ENCODE measurements at regions of chr4 and their contacts with region 1.

Region 1: DNA sequence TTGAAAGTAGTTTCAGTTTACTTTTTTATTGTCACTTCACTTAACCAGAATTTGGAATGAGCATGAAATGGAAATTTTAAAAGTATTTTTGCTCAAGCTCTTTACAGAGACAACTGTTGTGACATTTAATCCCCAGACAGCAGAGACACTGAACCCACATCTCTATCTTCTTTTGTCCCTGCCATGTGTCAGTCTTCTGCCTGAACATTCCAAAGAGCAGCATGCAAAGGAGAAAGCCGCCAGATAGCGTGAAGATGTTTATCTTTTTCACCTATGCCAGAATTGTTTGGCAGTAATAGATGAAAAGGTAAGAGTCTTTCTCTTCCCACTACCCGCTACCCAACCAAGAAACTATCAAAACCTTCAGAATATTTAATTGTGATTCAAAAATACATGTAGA is 46.8 kb downstream of the NDNF start:
- DNase-seq: no peak
- ATAC-seq: no peak
- H3K4me3 ChIP-seq: no peak overlapping the region
- H3K27ac ChIP-seq: no peak overlapping the region
- H3K4me1 ChIP-seq: peaks cover 0 to 4% (median 0%) of the 10 kb centered on the region in 12 donors
- H3K27me3 ChIP-seq: no peaks in the 10 kb centered on the region
- CTCF ChIP-seq: no peak
- POLR2A ChIP-seq: no peak

Region 2: DNA sequence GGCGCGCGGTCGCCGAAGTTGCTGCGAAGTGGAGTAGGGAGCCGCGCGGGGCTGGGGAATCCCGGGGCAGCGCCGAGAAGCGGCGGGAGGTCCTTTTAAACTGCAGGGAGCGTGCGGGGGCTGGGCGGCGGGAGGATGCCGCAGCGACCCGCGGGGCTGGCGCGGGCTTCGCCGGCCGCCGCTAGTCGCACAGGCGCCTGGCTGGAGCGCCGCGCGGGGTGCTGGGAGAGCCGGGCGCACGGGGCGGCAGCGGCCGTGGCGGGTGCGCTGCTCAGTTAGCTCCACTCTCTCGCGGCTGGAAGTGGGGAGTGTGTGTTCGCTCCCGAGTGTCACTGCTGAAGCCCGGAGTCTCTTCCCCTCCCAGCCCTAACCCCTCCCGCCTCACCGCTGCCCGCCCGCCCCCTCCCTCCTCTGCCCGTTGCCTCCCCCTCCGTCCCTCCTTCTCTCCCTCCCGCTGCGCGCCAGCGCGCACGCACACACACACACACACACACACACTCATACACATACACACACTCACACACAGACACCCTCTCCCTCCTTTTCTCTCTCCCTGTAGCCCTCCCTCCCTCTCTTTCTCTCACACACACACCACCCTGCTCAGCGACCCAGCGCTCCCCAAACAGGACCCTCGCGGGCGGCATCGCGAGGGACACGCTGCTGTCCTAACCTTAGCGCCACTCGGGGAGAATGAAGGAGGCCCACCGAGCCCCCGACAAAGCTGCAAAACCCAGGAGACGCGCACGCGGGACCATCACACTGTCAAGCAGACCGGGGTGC is 46.9 kb after region 1 on chr4 and contains the start of gene NDNF:
- intact Hi-C with region 1: loop called in 1 of 10 experiments (anchors 10 kb)
- DNase-seq: peak; percentile 38 to 72 (median 48)
- ATAC-seq: peak; percentile 45 to 80 (median 72)
- H3K4me3 ChIP-seq: peak within 1 kb of the TSS; percentile 50 to 83 (median 66)
- H3K27ac ChIP-seq: peak within 1 kb of the TSS in 11 of 12 donors; percentile 39 to 84 (median 70)
- H3K4me1 ChIP-seq: peaks cover 0 to 25% (median 0%) of the 10 kb centered on the region in 12 donors
- H3K27me3 ChIP-seq: peaks cover 0 to 56% (median 0%) of the 10 kb centered on the region in 9 donors
- CTCF ChIP-seq: peak in 1 of 12 donors; percentile 4
- POLR2A ChIP-seq: no peak
- total RNA-seq, gene NDNF: 3.0 to 11.2 (median 8.2) TPM

Region 3: GRCh38 chr4:121217351-121217750 is 191.8 kb after region 1 on chr4:
- intact Hi-C with region 1: no loop called
- DNase-seq: no peak
- ATAC-seq: no peak
- H3K4me3 ChIP-seq: no peak overlapping the region
- H3K27ac ChIP-seq: no peak overlapping the region
- H3K4me1 ChIP-seq: peaks cover 0 to 3% (median 0%) of the 10 kb centered on the region in 12 donors
- H3K27me3 ChIP-seq: no peaks in the 10 kb centered on the region
- CTCF ChIP-seq: no peak
- POLR2A ChIP-seq: no peak